Activated naive CD8-positive, alpha-beta T cell treated with anti-CD3 and anti-CD28 coated beads, Interleukin-2, amount 10 ng/mL, durations not matched to agents 7 days and 5 days (primary cell): ENCODE measurements at regions of chr11 and their contacts with region 1.

Region 1: GRCh38 chr11:8682303-8683114 is at the starts of genes RPL27A and TRIM66:
- DNase-seq: peak; percentile 99
- ATAC-seq: peak; percentile 94
- H3K4me3 Mint-ChIP-seq: peak within 1 kb of the TSS; percentile 98
- H3K27ac Mint-ChIP-seq: peak within 1 kb of the TSS; percentile 92
- H3K4me1 Mint-ChIP-seq: peaks cover 42% of the 10 kb centered on the region
- H3K27me3 Mint-ChIP-seq: no peaks in the 10 kb centered on the region
- total RNA-seq, gene RPL27A: 981 to 1,044 TPM
- total RNA-seq, gene TRIM66: 35.3 to 35.8 TPM

Region 2: DNA sequence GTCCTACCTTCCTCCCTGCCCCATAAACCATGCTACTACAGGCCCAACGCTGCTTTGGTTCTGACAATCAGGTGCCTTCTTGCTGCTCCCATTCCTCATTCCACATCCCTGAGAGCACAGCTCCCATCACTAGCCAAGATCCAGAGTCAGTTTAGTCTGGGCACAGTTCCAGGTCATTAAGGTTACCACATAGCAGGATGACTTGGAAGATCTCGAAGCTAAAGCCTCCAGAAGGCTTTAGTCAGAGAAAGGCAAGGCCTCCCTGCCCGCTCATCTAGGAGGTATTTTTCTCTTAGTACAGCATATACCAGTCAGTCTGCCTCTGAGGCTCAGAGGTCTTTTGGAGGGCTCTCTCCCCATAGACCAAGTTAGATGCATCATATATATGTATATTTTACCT is 30.4 kb before region 1 on chr11:
- POLR2A ChIA-PET with region 1: interaction called, 13 read pairs
- DNase-seq: no peak
- ATAC-seq: no peak
- H3K4me3 Mint-ChIP-seq: no peak overlapping the region
- H3K27ac Mint-ChIP-seq: peak overlapping the region; percentile 44
- H3K4me1 Mint-ChIP-seq: peaks cover 7% of the 10 kb centered on the region
- H3K27me3 Mint-ChIP-seq: no peaks in the 10 kb centered on the region

Region 3: DNA sequence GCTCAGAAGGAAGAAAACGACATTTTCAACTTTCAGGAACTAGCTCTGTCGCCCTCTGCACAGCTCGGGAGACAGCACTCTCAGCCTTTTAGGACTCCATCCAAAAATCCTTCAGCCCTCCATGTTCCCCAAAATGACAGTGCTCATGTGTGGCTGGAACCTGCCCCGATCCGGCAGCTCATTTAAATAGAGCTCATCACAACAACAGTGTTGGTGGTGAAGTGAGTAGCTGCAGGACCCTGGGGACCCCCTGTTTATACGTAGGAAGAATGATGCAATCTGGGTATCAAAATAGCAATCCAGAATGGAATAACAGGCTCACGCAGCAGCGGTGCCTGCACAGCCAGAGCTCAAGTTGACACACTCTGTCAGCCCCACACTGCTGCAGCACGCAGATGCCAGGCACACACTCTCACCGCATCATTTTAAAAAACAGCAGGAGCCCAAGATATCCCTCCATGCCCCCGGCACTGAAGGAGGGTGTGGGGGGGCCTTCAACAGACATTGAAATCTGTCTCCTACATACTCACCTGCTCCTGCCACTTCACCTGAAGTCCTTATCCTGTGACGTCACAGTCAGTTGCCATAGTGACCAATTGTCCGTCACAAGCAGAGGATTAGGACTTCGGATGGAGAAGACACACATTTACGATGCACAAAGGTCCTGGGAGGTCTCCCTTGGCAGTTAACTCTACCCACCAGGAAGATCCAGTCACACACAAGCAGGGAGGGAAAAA is 24.0 kb before region 1 on chr11:
- POLR2A ChIA-PET with region 1: interaction called, 13 read pairs
- DNase-seq: no peak
- ATAC-seq: no peak
- H3K4me3 Mint-ChIP-seq: no peak overlapping the region
- H3K27ac Mint-ChIP-seq: no peak overlapping the region
- H3K4me1 Mint-ChIP-seq: peaks cover 4% of the 10 kb centered on the region
- H3K27me3 Mint-ChIP-seq: no peaks in the 10 kb centered on the region

Region 4: DNA sequence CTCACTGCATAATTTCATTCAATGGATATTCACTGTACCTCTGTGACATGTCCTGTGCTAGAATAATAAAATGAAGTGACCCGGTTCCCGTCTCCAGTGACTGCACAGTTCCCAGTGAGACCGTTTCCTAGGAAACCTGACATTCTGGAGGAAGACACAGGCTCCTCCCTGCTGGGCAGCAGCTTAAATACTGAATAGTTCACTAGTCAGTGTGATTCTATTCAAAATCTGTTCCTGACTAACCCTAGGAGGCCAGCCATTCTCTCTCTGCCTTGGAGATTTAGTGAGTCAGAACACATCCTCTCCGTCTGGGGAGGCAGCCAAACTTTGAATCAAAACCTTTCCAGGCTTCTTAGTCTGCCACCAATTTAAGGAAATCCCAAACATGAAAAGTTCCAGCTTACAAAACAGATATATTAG is 11.3 kb before region 1 on chr11:
- POLR2A ChIA-PET with region 1: interaction called, 28 read pairs
- DNase-seq: no peak
- ATAC-seq: no peak
- H3K4me3 Mint-ChIP-seq: no peak overlapping the region
- H3K27ac Mint-ChIP-seq: peak overlapping the region; percentile 22
- H3K4me1 Mint-ChIP-seq: peaks cover 5% of the 10 kb centered on the region
- H3K27me3 Mint-ChIP-seq: no peaks in the 10 kb centered on the region

Region 5: DNA sequence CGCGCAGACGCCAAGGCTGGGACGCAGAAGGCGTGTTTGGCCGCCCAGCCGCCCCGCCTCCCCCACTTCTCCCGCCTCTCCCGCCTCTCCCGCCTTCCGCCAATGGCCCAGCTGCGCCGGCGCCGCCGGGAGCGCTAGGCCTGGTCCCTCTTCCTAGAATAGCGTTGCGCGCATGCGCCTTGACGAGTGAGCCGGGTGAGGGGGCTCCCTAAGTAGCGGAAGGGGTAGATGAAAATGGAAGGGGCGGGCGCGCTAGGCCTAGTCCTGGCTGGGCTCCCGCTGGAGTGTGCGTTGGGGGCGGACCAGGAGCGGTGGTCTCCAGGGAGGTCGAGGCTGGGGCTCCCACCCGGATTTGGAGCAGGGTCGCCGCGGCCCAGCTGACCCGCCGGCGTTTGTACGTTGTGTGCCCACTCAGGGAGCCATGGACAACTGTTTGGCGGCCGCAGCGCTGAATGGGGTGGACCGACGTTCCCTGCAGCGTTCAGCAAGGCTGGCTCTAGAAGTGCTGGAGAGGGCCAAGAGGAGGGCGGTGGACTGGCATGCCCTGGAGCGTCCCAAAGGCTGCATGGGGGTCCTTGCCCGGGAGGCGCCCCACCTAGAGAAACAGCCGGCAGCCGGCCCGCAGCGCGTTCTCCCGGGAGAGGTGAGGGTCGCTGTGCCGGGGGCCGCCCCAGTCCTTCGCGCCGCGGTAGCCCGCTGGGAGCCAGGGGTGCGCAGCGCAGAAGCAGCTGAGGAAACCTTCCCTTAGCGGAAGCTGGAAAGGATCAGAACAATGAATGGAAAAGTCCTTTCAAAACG is 228.7 kb after region 1 on chr11 and contains the start of gene AKIP1:
- POLR2A ChIA-PET with region 1: interaction called, 11 read pairs
- DNase-seq: peak; percentile 86
- ATAC-seq: peak; percentile 83
- H3K4me3 Mint-ChIP-seq: peak within 1 kb of the TSS; percentile 93
- H3K27ac Mint-ChIP-seq: peak within 1 kb of the TSS; percentile 88
- H3K4me1 Mint-ChIP-seq: peaks cover 44% of the 10 kb centered on the region
- H3K27me3 Mint-ChIP-seq: no peaks in the 10 kb centered on the region
- total RNA-seq, gene AKIP1: 21.8 to 23.4 TPM

Region 6: DNA sequence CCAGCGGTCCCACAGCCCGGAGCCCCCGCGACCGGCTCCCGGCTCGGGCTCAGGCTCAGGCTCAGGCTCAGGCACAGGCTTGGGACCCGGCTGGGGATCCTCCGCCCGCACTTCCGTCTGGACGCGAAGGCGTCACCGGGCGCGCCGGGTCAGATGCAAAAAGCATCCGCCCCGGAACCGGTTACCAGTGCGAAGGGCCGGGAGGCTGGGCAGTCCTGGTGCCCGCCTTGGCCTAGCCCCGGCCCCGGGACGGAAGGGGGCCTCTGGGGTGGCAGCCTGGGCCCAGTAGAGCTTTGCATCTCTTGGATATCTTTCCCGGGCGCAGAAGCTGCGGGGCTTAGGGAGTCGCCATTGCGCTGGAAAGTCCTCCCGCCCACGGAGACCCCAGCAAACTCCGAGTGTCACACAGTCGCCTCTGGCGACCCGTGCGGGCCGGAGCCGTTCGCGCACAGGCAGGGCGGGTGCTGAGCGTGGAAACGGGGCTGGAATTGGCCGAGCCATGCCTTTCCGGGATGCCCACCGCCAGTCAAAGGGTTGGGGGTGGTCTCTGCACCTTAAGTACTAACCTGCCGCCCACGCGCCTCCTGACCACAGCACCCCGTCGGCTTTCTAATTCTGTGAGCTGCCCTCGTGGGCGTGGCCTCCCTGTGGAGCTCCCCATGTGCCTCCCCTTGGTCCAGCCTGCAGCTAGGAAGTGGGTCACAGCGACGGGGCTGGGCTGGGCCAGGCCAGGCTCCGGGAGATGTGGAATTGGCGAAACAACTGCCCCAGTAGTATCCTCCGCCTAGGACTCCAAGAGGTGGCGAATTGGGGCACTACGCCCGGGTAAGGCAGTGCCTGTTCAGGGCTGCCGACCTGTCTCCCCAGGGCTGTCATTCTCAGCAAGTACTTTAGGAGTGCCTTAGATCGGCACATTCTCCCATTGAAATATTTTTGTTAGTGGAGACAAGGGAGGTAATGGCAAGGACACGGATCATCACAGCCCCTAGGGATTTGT is 282.1 kb after region 1 on chr11 and contains the start of gene TMEM9B:
- POLR2A ChIA-PET with region 1: interaction called, 24 read pairs
- DNase-seq: peak; percentile 89
- ATAC-seq: peak; percentile 87
- H3K4me3 Mint-ChIP-seq: peak within 1 kb of the TSS; percentile 99
- H3K27ac Mint-ChIP-seq: peak within 1 kb of the TSS; percentile 97
- H3K4me1 Mint-ChIP-seq: peaks cover 21% of the 10 kb centered on the region
- H3K27me3 Mint-ChIP-seq: no peaks in the 10 kb centered on the region
- total RNA-seq, gene TMEM9B: 28.9 to 32.4 TPM